GM18951 (cell line): ENCODE measurements at regions of chr20 and their contacts with region 1.

Region 1: GRCh38 chr20:50189681-50190582 is 698 bp upstream of the CEBPB start:
- POLR2A ChIP-seq: no peak

Region 2: GRCh38 chr20:50460460-50461267 is 270.7 kb after region 1 on chr20:
- in situ Hi-C with region 1: loop called (anchors 5 kb)
- POLR2A ChIP-seq: no peak